Activated naive CD4-positive, alpha-beta T cell treated with anti-CD3 and anti-CD28 coated beads for 36 hours (primary cell): ENCODE measurements at regions of chr1 and their contacts with region 1.

Region 1: DNA sequence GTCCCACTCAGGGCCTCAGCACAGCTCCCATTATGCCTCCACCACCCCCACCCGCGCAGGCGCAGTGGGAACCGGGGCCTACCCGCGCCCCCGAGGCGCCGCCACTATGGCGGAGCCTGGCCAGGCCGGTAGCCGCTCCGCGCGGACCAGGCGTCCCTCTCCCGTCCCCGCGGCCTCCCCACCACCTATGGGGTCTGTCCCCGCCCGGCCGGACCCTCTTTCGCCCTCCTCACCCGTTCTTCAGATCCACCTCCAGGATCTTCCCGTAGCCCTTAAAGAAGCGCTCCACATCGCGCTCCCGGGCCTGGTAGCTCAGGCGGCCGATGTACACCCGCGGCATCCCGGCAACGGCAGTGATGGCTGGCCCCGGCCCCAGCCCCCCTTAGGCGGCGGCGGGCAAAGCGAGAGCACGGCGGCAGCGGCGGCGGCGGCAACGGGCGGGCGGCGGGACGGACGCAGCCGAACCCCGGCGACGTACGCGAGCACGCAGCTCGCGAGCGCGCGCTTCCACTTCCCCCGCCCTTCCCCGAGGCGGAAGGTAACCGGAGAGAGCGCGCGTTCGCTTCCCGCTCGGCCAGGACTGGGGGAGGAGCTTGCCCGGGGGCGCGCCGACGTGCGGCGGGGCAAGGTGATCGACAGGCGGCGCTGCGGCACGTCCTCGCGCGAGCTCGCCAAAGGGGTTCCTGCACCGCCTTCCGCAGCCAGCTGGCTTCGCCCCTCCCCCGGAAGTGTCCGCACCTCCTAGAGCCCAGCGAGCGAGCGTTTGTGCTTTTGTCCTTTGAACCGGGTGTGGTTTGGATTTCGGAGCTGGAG is at the start of gene SRSF4:
- DNase-seq: peak; percentile 99
- H3K4me3 Mint-ChIP-seq: peak within 1 kb of the TSS; percentile 93
- H3K27ac Mint-ChIP-seq: peak within 1 kb of the TSS; percentile 98
- H3K4me1 Mint-ChIP-seq: peaks cover 37% of the 10 kb centered on the region
- H3K27me3 Mint-ChIP-seq: no peaks in the 10 kb centered on the region
- total RNA-seq, gene SRSF4: 166 to 170 TPM

Region 2: DNA sequence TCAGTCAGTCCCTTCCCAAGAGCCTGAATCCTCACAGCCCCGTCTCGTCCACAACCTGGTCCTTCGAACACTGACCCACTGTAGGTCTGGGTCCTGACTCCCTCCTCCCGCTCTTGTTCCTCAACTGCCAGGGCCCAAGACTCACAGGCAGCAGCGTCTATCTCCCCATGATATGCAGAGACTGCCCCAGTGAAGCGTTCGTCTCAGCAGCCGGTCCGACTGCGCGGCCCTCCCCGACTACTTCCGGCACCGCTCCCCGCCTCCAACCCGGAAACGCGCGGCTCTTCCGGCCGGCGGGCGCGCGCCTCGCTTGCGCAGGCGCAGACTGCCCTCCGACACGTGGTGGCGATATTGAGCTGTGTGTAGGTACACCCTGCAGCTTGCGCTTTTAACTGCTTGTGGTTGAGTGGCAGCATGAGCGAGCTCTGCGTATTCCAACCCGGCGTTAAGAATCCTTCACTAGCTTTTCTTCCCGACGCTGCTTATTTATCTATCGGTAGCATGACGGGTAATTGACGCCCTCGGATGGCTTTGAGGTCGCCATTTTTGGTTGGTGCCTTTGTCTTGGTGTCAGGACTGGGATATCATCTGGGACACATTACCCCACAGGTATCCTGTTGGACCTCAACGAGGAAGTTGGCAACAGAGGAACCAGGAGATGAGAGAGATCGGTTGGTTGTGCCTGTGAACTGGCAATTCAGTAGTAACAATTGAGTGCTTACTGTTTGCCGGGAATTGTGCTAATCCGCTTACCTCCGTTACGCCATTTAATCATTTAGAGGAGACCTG is 538.6 kb before region 1 on chr1 and contains the start of gene TAF12:
- CTCF ChIA-PET with region 1: no interaction called
- intact Hi-C with region 1: loop called (anchors 1 kb)
- DNase-seq: peak; percentile 93
- H3K4me3 Mint-ChIP-seq: peak within 1 kb of the TSS; percentile 96
- H3K27ac Mint-ChIP-seq: peak within 1 kb of the TSS; percentile 94
- H3K4me1 Mint-ChIP-seq: peaks cover 44% of the 10 kb centered on the region
- H3K27me3 Mint-ChIP-seq: no peaks in the 10 kb centered on the region
- total RNA-seq, gene TAF12: 22.5 to 23.5 TPM

Region 3: GRCh38 chr1:28736450-28737306 is 444.9 kb before region 1 on chr1 and contains the start of gene YTHDF2:
- CTCF ChIA-PET with region 1: no interaction called
- intact Hi-C with region 1: loop called (anchors 1 kb)
- DNase-seq: peak; percentile 99
- H3K4me3 Mint-ChIP-seq: peak within 1 kb of the TSS; percentile 96
- H3K27ac Mint-ChIP-seq: peak within 1 kb of the TSS; percentile 92
- H3K4me1 Mint-ChIP-seq: peaks cover 33% of the 10 kb centered on the region
- H3K27me3 Mint-ChIP-seq: no peaks in the 10 kb centered on the region
- total RNA-seq, gene YTHDF2: 64.9 to 66.1 TPM

Region 4: GRCh38 chr1:29043274-29043965 is 138.2 kb before region 1 on chr1:
- CTCF ChIA-PET with region 1: interaction called, 7 read pairs
- intact Hi-C with region 1: loop called (anchors 5 kb)
- DNase-seq: no peak
- H3K4me3 Mint-ChIP-seq: no peak overlapping the region
- H3K27ac Mint-ChIP-seq: peak overlapping the region; percentile 85
- H3K4me1 Mint-ChIP-seq: peaks cover 38% of the 10 kb centered on the region
- H3K27me3 Mint-ChIP-seq: no peaks in the 10 kb centered on the region

Region 5: DNA sequence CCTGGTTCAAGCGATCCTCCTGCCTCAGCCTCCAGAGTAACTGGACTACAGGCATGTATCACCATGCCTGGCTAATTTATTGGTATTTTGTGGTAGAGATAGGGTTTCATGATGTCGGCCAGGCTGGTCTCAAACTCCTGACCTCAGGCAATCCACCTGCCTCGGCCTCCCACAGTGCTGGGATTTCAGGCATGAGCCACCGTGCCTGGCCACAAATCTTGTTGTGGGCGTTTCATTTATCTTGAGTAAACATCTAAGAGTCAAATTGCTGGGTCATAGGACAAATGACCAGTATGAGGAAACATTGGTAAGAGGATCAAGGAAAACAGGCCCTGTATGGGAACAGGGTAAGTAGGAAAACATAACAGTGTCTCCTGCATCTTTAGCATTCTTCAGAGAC is 75.8 kb before region 1 on chr1:
- CTCF ChIA-PET with region 1: no interaction called
- intact Hi-C with region 1: no loop called
- DNase-seq: no peak
- H3K4me3 Mint-ChIP-seq: no peak overlapping the region
- H3K27ac Mint-ChIP-seq: no peak overlapping the region
- H3K4me1 Mint-ChIP-seq: no peaks in the 10 kb centered on the region
- H3K27me3 Mint-ChIP-seq: no peaks in the 10 kb centered on the region

Region 6: DNA sequence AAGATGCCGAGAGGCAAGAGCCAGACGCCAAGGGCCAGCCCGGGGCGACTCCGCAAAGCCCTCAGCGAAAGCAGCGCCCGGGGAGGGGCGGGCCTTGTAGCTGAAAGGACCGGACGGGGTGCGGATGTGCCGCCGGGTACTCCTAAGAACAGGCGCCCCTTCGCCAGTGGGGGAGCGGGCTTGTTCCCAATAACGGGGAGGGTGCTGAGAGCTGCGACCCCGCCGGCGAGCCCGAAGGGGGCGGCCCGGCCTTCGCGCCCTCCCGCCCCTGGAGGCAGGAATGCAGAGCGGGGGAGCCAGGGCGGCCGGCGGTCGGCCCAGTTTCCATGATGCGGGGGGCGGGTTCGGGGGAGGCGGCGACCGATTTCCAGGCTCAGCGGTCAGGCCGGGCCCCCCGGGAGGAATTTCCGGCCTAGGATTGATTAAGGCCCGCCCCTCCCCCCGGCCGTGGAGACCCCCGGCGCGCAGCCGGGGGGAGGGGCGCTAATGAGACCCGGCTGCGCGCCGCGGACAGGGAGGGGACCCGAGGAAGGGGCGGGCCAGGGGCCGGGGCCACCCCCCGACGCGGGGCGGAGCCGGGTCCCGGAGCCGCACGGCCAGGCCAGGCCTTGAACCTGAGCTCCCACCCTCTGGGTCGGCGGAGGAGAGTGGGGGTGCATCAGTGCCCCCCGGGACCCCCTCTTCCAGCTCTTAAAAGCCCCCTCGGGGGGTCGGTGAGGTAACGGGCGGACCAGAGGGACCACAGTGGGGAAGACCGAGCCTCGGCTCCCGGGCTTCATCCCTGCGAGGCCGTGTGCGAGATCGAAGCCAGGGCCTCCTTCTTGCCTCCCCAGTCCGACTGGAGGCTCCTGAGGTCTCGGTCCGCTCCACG is 57.0 kb before region 1 on chr1:
- CTCF ChIA-PET with region 1: no interaction called
- intact Hi-C with region 1: loop called (anchors 2 kb)
- DNase-seq: peak; percentile 64
- H3K4me3 Mint-ChIP-seq: peak overlapping the region; percentile 70
- H3K27ac Mint-ChIP-seq: no peak overlapping the region
- H3K4me1 Mint-ChIP-seq: peaks cover 12% of the 10 kb centered on the region
- H3K27me3 Mint-ChIP-seq: peaks cover 21% of the 10 kb centered on the region

Region 7: DNA sequence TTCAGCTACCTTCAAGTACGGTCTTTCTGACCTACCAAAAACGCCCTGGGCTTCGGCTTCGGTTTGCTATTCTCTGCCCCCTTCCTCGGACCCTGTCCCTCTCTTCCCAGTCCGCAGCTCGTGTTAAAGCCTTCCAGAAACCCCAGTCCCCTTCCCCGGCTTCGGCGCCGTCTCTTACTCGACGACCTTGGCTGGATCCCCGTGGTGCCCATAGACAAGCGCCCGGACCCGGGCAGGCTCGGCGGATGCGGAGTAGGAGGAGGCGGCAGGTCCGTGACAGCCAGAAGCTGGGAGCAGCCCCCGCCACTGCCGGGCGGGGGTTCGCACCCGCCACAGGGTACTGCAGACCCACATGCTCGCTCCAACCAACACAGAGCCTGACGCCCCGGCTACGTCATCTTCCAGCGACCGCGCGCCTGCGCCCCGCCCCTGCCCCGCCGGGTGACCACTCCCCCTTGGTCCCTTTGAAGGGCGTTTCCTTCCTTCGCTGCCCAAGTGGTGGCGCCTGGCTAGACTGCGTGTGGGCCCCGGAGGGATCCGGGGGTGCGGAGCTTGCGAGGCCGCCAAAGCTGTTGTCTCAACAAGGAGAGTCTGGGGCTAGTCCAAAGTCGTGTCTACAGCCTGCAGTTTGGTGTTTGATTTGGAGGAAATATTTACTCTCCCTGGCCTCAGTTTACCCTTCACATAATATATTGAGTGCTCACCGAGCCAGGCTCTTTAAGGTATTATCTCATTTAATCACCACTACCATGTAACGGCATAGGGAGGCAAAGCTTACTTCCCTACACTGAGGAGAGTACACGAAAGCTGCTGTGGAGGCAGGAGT is 49.1 kb after region 1 on chr1 and contains the start of gene MECR:
- CTCF ChIA-PET with region 1: no interaction called
- intact Hi-C with region 1: loop called (anchors 2 kb)
- DNase-seq: peak; percentile 96
- H3K4me3 Mint-ChIP-seq: peak within 1 kb of the TSS; percentile 96
- H3K27ac Mint-ChIP-seq: peak within 1 kb of the TSS; percentile 80
- H3K4me1 Mint-ChIP-seq: peaks cover 11% of the 10 kb centered on the region
- H3K27me3 Mint-ChIP-seq: peaks cover 4% of the 10 kb centered on the region
- total RNA-seq, gene MECR: 35.7 to 36.3 TPM